ENCODE measurements at regions of chr4 and their contacts with region 1.

Region 1: DNA sequence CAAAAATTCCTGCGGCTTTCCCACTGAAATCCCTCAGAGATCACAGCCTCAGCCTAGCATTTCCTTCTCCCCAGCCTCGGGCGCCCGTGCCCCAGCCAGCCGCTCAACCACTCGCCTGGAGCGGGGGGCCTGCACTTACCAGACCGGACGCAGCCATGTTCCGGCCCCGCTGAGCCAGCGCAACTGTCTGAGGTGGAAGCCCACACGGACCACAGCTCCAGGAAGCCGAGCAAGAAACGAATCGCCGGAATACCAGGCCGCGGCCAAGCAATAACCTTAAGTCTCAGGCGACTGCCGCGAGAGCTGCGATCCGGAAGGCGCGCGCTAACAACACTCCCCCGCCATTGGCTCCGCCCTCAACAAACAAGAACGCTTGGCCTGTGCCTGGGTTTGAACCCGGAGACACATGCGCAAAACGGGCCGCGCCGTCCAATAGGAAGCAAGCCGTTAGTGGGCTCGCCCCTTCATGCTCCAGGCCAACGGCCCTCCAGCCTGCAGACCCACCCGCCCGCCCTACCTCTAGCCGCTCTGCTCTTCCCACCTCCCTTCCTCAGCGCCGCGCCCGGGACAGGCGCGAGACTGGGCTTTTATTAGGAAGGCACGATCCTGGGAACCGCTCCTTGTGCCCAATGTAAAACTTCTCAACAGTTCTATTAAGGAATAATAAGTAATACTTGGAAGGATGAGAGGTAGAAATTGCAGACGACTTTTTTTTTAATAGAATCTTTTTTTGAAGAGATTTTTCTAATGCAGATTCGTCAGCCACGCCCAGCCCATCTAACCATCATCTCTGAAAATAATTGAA is at the start of gene CENPC:
- DNase-seq: peak; percentile 99
- ATAC-seq: peak; percentile 96
- H3K4me3 ChIP-seq: peak within 1 kb of the TSS; percentile 96
- H3K27ac ChIP-seq: peak within 1 kb of the TSS; percentile 61
- H3K4me1 ChIP-seq: peaks cover 30% of the 10 kb centered on the region
- H3K27me3 ChIP-seq: no peaks in the 10 kb centered on the region
- CTCF ChIP-seq: no peak
- total RNA-seq, gene CENPC: 8.4 and 10.6 TPM in 2 replicates

Region 2: GRCh38 chr4:67366311-67366861 is 179.0 kb before region 1 on chr4:
- CTCF ChIA-PET with region 1: no interaction called
- POLR2A ChIA-PET with region 1: no interaction called
- intact Hi-C with region 1: no loop called
- DNase-seq: peak; percentile 11
- ATAC-seq: peak; percentile 73
- H3K4me3 ChIP-seq: no peak overlapping the region
- H3K27ac ChIP-seq: no peak overlapping the region
- H3K4me1 ChIP-seq: no peaks in the 10 kb centered on the region
- H3K27me3 ChIP-seq: no peaks in the 10 kb centered on the region
- CTCF ChIP-seq: no peak

Region 3: GRCh38 chr4:67483868-67484602 is 61.4 kb before region 1 on chr4:
- CTCF ChIA-PET with region 1: no interaction called
- POLR2A ChIA-PET with region 1: interaction called, 3 read pairs
- intact Hi-C with region 1: loop called (anchors 1 kb)
- DNase-seq: no peak
- ATAC-seq: peak; percentile 64
- H3K4me3 ChIP-seq: no peak overlapping the region
- H3K27ac ChIP-seq: no peak overlapping the region
- H3K4me1 ChIP-seq: no peaks in the 10 kb centered on the region
- H3K27me3 ChIP-seq: no peaks in the 10 kb centered on the region
- CTCF ChIP-seq: no peak

Region 4: GRCh38 chr4:67694662-67695061 is 149.3 kb after region 1 on chr4:
- CTCF ChIA-PET with region 1: no interaction called
- POLR2A ChIA-PET with region 1: no interaction called
- intact Hi-C with region 1: loop called (anchors 2 kb)
- DNase-seq: peak; percentile 82
- ATAC-seq: peak; percentile 92
- H3K4me3 ChIP-seq: peak overlapping the region; percentile 12; the same call in 1 of the 2 replicates
- H3K27ac ChIP-seq: peak overlapping the region; percentile 62
- H3K4me1 ChIP-seq: peaks cover 40% of the 10 kb centered on the region
- H3K27me3 ChIP-seq: no peaks in the 10 kb centered on the region
- CTCF ChIP-seq: no peak

Region 5: GRCh38 chr4:67871867-67872266 is 326.5 kb after region 1 on chr4:
- CTCF ChIA-PET with region 1: no interaction called
- POLR2A ChIA-PET with region 1: no interaction called
- intact Hi-C with region 1: loop called (anchors 1 kb)
- DNase-seq: peak; percentile 85
- ATAC-seq: peak; percentile 92
- H3K4me3 ChIP-seq: no peak overlapping the region
- H3K27ac ChIP-seq: no peak overlapping the region
- H3K4me1 ChIP-seq: no peaks in the 10 kb centered on the region
- H3K27me3 ChIP-seq: no peaks in the 10 kb centered on the region
- CTCF ChIP-seq: peak; percentile 88

Region 6: DNA sequence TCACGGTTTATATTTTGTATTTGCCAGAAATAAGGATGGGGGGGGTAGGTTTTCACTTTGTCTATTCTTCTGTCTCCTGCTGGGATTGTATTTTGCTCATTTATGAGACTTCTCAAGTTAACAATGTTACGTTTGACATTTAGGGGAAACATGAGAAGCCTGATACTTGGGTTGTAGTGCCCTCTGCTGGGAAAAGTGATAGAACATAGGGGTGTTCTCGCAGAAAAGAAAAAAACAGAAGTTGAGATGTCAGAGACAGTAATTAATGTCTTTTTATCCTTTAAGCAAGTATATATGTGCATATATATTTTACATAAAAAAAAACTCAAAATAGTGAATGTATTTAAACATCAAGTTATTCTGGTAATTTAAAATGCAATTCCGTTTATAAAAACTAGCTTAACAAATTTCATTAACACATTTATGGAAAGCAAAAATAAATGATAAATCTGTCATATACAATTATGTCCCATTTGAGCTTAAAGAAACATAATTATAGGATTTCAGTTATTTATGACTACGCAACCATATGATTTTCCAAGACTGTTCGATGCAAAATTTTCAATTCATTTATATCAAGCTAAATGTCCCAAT is 630.3 kb after region 1 on chr4:
- CTCF ChIA-PET with region 1: no interaction called
- POLR2A ChIA-PET with region 1: no interaction called
- intact Hi-C with region 1: loop called (anchors 10 kb)
- DNase-seq: peak; percentile 86
- ATAC-seq: peak; percentile 83
- H3K4me3 ChIP-seq: no peak overlapping the region
- H3K27ac ChIP-seq: no peak overlapping the region
- H3K4me1 ChIP-seq: peaks cover 2% of the 10 kb centered on the region
- H3K27me3 ChIP-seq: peaks cover 4% of the 10 kb centered on the region; the same call in 1 of the 2 replicates
- CTCF ChIP-seq: peak; percentile 97